Activated naive CD8-positive, alpha-beta T cell treated with anti-CD3 and anti-CD28 coated beads, Interleukin-2, amount 10 ng/mL, durations not matched to agents 7 days and 5 days (primary cell): ENCODE measurements at regions of chr1 and their contacts with region 1.

Region 1: DNA sequence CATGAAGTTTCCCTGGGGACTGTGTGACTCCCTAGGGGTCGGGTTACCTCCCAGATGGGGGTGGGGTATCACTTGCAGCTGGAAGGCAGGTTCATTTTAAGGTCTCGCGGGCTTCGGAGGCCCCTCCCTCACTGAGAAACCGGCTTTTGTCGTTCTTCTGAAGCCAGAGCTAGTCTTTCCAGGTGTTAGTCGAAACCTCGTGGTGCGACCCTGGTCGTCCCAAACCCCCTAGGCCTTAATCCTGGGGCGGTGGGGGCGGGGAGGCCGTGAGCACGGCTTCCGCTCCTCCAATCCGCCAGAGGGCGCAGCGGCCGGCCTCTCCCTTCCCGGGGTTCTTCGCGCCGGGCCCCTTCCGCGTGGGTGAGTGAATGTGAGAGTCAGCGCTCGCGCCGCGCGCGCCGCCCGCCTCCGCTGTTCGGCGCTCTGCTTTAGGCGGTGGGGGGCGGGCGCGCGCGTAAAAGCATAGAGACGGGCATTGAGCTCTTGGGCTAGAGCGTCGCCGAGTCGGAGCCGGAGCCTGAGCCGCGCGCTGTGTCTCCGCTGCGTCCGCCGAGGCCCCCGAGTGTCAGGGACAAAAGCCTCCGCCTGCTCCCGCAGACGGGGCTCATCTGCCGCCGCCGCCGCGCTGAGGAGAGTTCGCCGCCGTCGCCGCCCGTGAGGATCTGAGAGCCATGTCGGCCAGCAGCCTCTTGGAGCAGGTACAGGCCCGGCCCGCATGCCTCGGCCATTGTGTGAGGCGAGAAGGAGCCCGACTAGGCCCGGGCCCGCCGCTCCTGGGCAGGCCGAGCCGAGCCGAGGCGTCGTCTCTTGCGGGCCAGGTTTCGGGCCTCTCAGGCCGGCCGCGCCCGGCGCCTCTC is at the start of gene YTHDF2:
- DNase-seq: peak; percentile 98
- ATAC-seq: peak; percentile 98
- H3K4me3 Mint-ChIP-seq: peak within 1 kb of the TSS; percentile 96
- H3K27ac Mint-ChIP-seq: peak within 1 kb of the TSS; percentile 94
- H3K4me1 Mint-ChIP-seq: peaks cover 22% of the 10 kb centered on the region
- H3K27me3 Mint-ChIP-seq: no peaks in the 10 kb centered on the region
- total RNA-seq, gene YTHDF2: 62.5 to 70.2 TPM

Region 2: GRCh38 chr1:28642847-28643635 is 93.6 kb before region 1 on chr1 and contains the start of gene TAF12:
- POLR2A ChIA-PET with region 1: interaction called, 76 read pairs
- DNase-seq: peak; percentile 90
- ATAC-seq: peak; percentile 86
- H3K4me3 Mint-ChIP-seq: peak within 1 kb of the TSS; percentile 98
- H3K27ac Mint-ChIP-seq: peak within 1 kb of the TSS; percentile 99
- H3K4me1 Mint-ChIP-seq: peaks cover 37% of the 10 kb centered on the region
- H3K27me3 Mint-ChIP-seq: no peaks in the 10 kb centered on the region
- total RNA-seq, gene TAF12: 29.9 to 30.5 TPM

Region 3: DNA sequence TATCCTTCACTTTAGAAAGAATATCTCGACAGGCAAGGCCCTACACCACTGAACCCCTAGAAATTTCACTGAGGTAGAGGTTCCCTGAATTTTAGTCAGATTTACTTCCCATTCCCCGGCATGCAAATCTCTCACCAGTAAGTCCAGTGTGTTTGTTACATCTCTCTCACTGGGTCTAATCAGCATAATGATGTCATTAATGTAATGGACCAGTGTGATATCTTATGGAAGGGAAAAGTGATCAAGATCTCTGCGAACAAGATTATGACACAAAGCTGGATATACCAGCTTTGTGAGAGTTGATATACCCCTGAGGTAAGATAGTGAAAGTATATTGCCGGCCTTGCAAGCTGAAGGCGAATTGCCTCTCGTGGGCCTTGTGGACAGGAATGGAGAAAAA is 80.3 kb before region 1 on chr1:
- POLR2A ChIA-PET with region 1: no interaction called
- DNase-seq: no peak
- ATAC-seq: no peak
- H3K4me3 Mint-ChIP-seq: no peak overlapping the region
- H3K27ac Mint-ChIP-seq: no peak overlapping the region
- H3K4me1 Mint-ChIP-seq: no peaks in the 10 kb centered on the region
- H3K27me3 Mint-ChIP-seq: no peaks in the 10 kb centered on the region

Region 4: GRCh38 chr1:28668191-28668955 is 68.3 kb before region 1 on chr1 and contains the start of gene GMEB1:
- POLR2A ChIA-PET with region 1: interaction called, 50 read pairs
- DNase-seq: peak; percentile 92
- ATAC-seq: peak; percentile 76
- H3K4me3 Mint-ChIP-seq: peak within 1 kb of the TSS; percentile 91
- H3K27ac Mint-ChIP-seq: peak within 1 kb of the TSS; percentile 97
- H3K4me1 Mint-ChIP-seq: peaks cover 13% of the 10 kb centered on the region
- H3K27me3 Mint-ChIP-seq: no peaks in the 10 kb centered on the region
- total RNA-seq, gene GMEB1: 31.7 to 32.7 TPM

Region 5: GRCh38 chr1:28775121-28775944 is 38.7 kb after region 1 on chr1:
- POLR2A ChIA-PET with region 1: interaction called, 22 read pairs
- DNase-seq: peak; percentile 78
- ATAC-seq: peak; percentile 94
- H3K4me3 Mint-ChIP-seq: peak overlapping the region; percentile 84
- H3K27ac Mint-ChIP-seq: peak overlapping the region; percentile 54
- H3K4me1 Mint-ChIP-seq: peaks cover 3% of the 10 kb centered on the region
- H3K27me3 Mint-ChIP-seq: peaks cover 5% of the 10 kb centered on the region